Endothelial cell of umbilical vein (primary cell): ENCODE measurements at regions of chr1 and their contacts with region 1.

Region 1: DNA sequence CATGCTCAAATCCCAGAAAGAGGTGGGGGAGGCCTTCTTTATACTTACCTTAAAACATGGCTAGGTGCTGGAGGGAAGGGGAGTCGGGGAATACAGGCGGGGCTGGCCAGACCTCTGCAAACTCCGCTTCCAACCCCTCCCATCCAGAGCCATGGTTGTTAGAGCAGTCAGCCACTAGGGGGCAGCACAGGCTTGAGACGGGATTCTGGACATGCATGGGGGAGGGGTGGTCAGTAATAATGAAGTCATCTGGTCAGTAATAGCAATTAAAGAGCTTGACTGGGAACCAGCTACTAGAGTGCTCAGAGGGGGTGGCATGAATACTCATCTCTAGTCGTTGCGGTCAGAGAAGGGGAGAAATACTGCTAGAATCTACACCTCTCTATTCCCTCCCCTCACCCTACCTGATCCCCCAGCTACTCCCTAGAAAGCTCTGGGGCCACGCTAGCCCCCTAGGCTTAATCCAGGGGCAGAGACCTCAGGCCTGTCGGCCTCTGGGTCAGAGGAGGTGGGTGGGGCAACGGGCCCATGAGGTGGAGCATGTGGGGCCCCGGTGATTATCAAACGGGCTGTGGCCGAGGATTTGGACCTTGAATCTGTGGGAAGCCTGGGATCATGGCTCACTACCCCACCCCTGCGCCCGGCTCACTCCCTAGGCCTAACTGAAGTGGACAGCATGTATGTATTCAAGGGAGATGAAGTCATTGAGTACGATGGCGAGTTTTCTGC is 2.9 kb downstream of the CASQ1 start:
- DNase-seq: peak; percentile 86
- H3K4me3 ChIP-seq: no peak overlapping the region
- H3K27ac ChIP-seq: no peak overlapping the region
- H3K4me1 ChIP-seq: peaks cover 5% of the 10 kb centered on the region
- H3K27me3 ChIP-seq: no peaks in the 10 kb centered on the region
- CTCF ChIP-seq: peak; percentile 90 to 91
- POLR2A ChIP-seq: no peak

Region 2: DNA sequence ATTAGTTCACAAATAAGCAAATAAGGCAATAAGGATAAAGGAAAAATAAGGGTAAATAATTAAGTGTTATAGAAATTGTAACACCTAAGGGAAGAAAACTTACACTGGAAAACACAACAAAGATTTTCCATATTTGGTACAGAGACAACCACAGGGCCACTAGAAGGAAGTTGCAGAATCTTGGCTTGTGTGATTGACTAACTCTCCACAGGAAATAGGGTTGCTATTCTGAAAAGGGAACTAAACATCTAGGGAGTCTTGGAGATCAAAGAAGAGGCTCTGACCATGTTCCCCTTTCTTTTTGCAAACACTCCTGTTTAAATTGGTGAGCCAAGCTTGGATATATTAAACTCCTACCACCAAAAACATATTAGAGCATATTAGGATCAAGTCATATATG is 546.6 kb before region 1 on chr1:
- CTCF ChIA-PET with region 1: no interaction called
- POLR2A ChIA-PET with region 1: no interaction called
- dilution Hi-C with region 1: no loop called
- intact Hi-C with region 1: no loop called
- DNase-seq: no peak
- H3K4me3 ChIP-seq: no peak overlapping the region
- H3K27ac ChIP-seq: no peak overlapping the region
- H3K4me1 ChIP-seq: no peaks in the 10 kb centered on the region
- H3K27me3 ChIP-seq: no peaks in the 10 kb centered on the region
- CTCF ChIP-seq: no peak
- POLR2A ChIP-seq: no peak

Region 3: GRCh38 chr1:159945483-159946241 is 247.6 kb before region 1 on chr1 and contains the start of gene IGSF9:
- CTCF ChIA-PET with region 1: no interaction called
- POLR2A ChIA-PET with region 1: no interaction called
- dilution Hi-C with region 1: no loop called
- intact Hi-C with region 1: no loop called
- DNase-seq: peak; percentile 85
- H3K4me3 ChIP-seq: peak within 1 kb of the TSS in 2 of 3 experiments; percentile 15 to 16
- H3K27ac ChIP-seq: no peak within 1 kb of the TSS
- H3K4me1 ChIP-seq: peaks cover 5% of the 10 kb centered on the region
- H3K27me3 ChIP-seq: peaks cover 22 to 36% of the 10 kb centered on the region in 2 experiments
- CTCF ChIP-seq: peak; percentile 47 to 72
- POLR2A ChIP-seq: no peak
- total RNA-seq, gene IGSF9: 0.15 and 0.16 TPM in 2 replicates

Region 4: DNA sequence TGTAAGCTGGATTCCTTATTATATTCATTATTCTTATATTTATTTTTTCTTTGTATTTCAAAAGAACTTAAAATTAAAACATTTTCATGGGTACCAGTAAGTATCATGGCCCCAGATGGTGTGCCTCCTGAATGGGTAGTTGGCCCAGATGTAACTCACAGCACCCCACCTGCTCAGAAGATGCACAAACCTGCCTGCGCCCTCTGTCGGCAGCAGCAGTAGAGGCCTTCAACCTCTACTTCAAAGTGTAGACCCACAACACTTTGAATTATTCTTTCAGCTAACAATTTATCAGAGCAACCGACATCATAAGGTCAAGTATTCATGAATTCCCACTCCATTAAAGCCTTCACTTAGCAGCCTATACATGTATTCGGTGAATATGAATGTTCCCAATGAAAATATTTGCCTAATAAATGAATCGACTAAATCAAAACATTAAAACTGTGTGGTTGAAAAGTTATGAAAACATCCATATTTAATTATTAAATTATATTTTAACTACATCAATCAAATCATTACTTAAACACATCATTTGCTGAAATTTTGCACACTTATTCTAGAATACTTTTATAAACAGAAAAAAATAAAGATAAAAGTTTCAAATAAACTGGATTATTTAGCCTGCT is 186.8 kb before region 1 on chr1:
- CTCF ChIA-PET with region 1: no interaction called
- POLR2A ChIA-PET with region 1: no interaction called
- dilution Hi-C with region 1: no loop called
- intact Hi-C with region 1: no loop called
- DNase-seq: peak; percentile 55
- H3K4me3 ChIP-seq: no peak overlapping the region
- H3K27ac ChIP-seq: no peak overlapping the region
- H3K4me1 ChIP-seq: no peaks in the 10 kb centered on the region
- H3K27me3 ChIP-seq: peaks cover 16 to 19% of the 10 kb centered on the region in 2 experiments
- CTCF ChIP-seq: peak; percentile 86 to 91
- POLR2A ChIP-seq: no peak

Region 5: GRCh38 chr1:160161965-160162705 is 31.1 kb before region 1 on chr1:
- CTCF ChIA-PET with region 1: interaction called, 7 read pairs
- POLR2A ChIA-PET with region 1: no interaction called
- dilution Hi-C with region 1: no loop called
- intact Hi-C with region 1: loop called (anchors 1 kb)
- DNase-seq: peak; percentile 34
- H3K4me3 ChIP-seq: no peak overlapping the region
- H3K27ac ChIP-seq: no peak overlapping the region
- H3K4me1 ChIP-seq: no peaks in the 10 kb centered on the region
- H3K27me3 ChIP-seq: peaks cover 8 to 11% of the 10 kb centered on the region in 2 experiments
- CTCF ChIP-seq: peak; percentile 20 to 68
- POLR2A ChIP-seq: no peak

Region 6: DNA sequence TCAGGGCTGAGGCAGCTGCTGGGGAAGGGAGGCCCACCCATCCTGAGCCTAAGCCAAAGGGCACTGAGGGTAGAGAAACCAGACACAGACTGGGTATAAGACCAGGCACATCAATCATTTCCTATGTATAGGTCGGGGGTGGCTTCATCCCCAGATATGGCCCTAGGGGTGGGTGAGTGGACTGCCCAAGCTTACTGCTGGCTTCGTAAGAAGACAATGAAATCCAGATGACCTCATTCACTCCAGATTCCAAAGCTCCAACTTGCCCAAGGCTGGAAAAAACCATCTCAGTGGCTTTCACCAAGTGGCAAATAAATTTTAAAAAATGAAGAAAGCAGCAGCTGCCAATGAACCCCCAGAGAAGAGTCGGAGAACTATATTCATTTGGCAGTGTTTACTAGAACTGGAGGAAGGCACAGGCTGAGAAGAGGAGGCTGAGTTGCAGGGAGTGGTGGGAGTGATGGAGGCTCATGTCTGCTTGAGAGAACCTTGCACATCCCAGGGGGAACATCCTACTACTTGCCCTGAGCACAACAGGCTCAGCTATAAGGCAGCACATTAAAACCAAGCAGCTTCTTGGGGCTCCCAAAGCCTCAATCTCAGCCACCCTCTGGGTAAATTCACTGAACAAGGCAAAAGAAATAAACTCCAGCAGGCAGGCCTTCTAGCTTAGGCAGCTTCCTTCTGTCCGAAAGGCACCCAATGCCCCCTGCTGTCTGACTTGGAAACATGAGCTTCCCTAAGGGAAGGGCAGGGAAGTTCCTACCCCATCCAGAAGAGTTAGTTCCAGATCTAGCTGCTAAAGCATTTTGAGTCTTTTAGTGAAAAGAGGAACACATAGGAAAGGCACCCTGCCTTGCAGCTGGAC is 26.0 kb after region 1 on chr1:
- CTCF ChIA-PET with region 1: interaction called, 511 read pairs
- POLR2A ChIA-PET with region 1: interaction called, 5 read pairs
- dilution Hi-C with region 1: no loop called
- intact Hi-C with region 1: loop called (anchors 1 kb)
- DNase-seq: peak; percentile 73
- H3K4me3 ChIP-seq: no peak overlapping the region
- H3K27ac ChIP-seq: peak overlapping the region; percentile 16
- H3K4me1 ChIP-seq: peaks cover 12% of the 10 kb centered on the region
- H3K27me3 ChIP-seq: no peaks in the 10 kb centered on the region
- CTCF ChIP-seq: peak; percentile 52 to 70
- POLR2A ChIP-seq: no peak

Region 7: GRCh38 chr1:160238408-160238807 is 45.2 kb after region 1 on chr1:
- CTCF ChIA-PET with region 1: interaction called, 61 read pairs
- POLR2A ChIA-PET with region 1: no interaction called
- dilution Hi-C with region 1: no loop called
- intact Hi-C with region 1: no loop called
- DNase-seq: no peak
- H3K4me3 ChIP-seq: no peak overlapping the region
- H3K27ac ChIP-seq: no peak overlapping the region
- H3K4me1 ChIP-seq: no peaks in the 10 kb centered on the region
- H3K27me3 ChIP-seq: no peaks in the 10 kb centered on the region
- CTCF ChIP-seq: no peak
- POLR2A ChIP-seq: no peak

Region 8: GRCh38 chr1:160261893-160262794 is 68.9 kb after region 1 on chr1 and contains the start of gene DCAF8:
- CTCF ChIA-PET with region 1: interaction called, 21 read pairs
- POLR2A ChIA-PET with region 1: no interaction called
- dilution Hi-C with region 1: no loop called
- intact Hi-C with region 1: no loop called
- DNase-seq: peak; percentile 99
- H3K4me3 ChIP-seq: peak within 1 kb of the TSS; percentile 27 to 87 (median 64)
- H3K27ac ChIP-seq: peak within 1 kb of the TSS; percentile 74
- H3K4me1 ChIP-seq: peaks cover 15% of the 10 kb centered on the region
- H3K27me3 ChIP-seq: no peaks in the 10 kb centered on the region
- CTCF ChIP-seq: no peak
- POLR2A ChIP-seq: peak; percentile 91
- total RNA-seq, gene DCAF8: 99.9 and 106 TPM in 2 replicates

Region 9: DNA sequence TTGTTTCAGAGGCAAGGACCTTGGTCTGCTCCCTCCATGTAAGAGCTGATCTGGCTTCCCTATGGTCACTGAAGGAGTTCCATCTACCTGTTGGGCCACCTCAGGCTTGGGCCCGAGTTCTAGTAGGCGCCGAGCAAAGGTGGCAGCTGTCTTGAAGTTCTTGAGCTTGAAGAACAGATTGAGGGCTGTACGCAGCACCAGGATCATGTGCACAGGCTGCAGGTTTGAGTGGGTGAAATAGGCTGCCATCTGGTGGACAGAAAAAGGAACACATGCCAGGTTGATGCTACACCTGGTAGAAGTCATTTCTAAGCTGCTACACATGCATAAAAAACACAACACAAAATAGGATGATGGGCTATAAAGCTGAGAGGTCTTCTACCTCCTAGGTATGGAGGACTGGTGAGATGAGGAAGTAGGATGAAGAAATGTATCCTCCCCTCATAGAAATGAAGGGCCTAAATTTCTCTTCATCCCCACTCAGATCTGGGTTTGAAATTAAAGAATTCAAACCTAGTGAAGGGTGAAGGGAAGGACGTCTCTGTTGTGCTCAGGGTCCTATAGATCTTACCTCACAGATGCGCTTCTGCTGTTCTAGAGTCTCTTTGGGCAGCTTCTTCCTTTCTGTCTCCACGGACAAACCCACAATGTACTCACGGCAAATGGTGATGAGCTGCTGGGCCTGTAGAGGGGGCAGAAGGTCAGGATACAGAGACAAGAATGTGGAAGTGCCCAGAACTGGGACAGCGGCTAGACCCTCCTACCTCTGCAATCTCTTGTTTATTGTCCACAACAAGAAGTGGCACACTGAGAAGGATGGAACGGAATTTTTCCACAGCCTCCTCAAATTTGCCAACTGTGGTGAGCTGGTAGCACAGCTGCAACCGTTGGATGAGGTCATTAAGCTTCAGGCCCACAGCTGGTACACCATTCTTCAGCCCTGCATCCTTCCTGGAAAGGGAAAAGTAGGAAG is 98.3 kb after region 1 on chr1:
- CTCF ChIA-PET with region 1: interaction called, 281 read pairs
- POLR2A ChIA-PET with region 1: interaction called, 3 read pairs
- dilution Hi-C with region 1: no loop called
- intact Hi-C with region 1: loop called (anchors 1 kb)
- DNase-seq: peak; percentile 76
- H3K4me3 ChIP-seq: no peak overlapping the region
- H3K27ac ChIP-seq: no peak overlapping the region
- H3K4me1 ChIP-seq: no peaks in the 10 kb centered on the region
- H3K27me3 ChIP-seq: no peaks in the 10 kb centered on the region
- CTCF ChIP-seq: peak; percentile 66 to 72
- POLR2A ChIP-seq: no peak

Region 10: DNA sequence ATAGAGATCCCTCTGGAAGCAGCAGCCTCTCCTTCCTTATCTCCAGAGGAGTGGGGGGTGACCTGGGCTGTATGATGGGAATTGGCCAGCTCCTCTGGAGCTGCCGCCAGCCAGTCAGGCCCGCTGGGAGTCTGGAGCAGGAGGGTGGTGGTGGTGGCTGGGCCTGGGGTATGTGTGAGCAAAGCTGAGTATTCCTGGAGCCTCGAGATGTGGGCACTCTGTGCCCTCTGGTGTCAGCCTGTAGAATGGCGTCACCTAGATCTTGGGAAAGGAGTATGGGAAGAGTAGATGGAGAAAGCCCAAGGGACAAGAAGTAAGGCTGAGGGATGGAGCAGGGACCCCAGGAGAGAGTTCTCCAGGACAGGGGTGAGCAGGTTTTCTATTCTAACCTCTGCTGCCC is 223.1 kb after region 1 on chr1:
- CTCF ChIA-PET with region 1: interaction called, 5 read pairs
- POLR2A ChIA-PET with region 1: no interaction called
- dilution Hi-C with region 1: no loop called
- intact Hi-C with region 1: loop called (anchors 1 kb)
- DNase-seq: peak; percentile 31
- H3K4me3 ChIP-seq: no peak overlapping the region
- H3K27ac ChIP-seq: no peak overlapping the region
- H3K4me1 ChIP-seq: no peaks in the 10 kb centered on the region
- H3K27me3 ChIP-seq: peaks cover 23 to 35% of the 10 kb centered on the region in 2 experiments
- CTCF ChIP-seq: peak; percentile 47 to 56
- POLR2A ChIP-seq: no peak

Region 11: DNA sequence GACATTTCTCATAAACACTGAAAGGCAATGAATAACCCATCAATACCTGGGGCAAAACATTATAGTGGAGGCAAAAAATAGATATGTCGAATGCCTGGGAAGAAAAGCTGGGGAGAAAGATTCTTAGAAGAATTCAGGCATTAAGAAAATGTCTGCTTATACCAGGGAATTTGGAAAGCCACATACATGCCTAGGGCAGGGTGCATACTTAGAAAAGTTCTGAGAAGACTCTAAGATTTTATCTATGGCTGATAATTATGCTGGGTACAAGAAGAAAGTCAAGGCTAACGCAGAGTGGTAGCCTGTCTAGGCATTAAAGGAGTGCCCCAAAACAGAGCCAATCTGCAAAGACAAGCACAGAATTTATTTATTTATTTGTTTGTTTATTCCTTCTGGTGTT is 311.4 kb after region 1 on chr1:
- CTCF ChIA-PET with region 1: no interaction called
- POLR2A ChIA-PET with region 1: no interaction called
- dilution Hi-C with region 1: no loop called
- intact Hi-C with region 1: no loop called
- DNase-seq: no peak
- H3K4me3 ChIP-seq: no peak overlapping the region
- H3K27ac ChIP-seq: no peak overlapping the region
- H3K4me1 ChIP-seq: no peaks in the 10 kb centered on the region
- H3K27me3 ChIP-seq: no peaks in the 10 kb centered on the region
- CTCF ChIP-seq: no peak
- POLR2A ChIP-seq: no peak